CD4-positive, alpha-beta memory T cell (primary cell): ENCODE measurements at regions of chr19 and their contacts with region 1.

Region 1: GRCh38 chr19:49546825-49547565 is 19.2 kb downstream of the RCN3 start:
- DNase-seq: peak; percentile 70 to 81 (median 78)
- H3K4me3 ChIP-seq: peak overlapping the region; percentile 4 to 34
- H3K4me3 Mint-ChIP-seq: peak overlapping the region; percentile 43 to 91 (median 84)
- H3K27ac ChIP-seq: no peak overlapping the region
- H3K27ac Mint-ChIP-seq: peak overlapping the region; percentile 40 to 95 (median 90)
- H3K4me1 ChIP-seq: peaks cover 47% of the 10 kb centered on the region
- H3K4me1 Mint-ChIP-seq: peaks cover 27 to 61% (median 39%) of the 10 kb centered on the region in 4 donors
- H3K27me3 ChIP-seq: no peaks in the 10 kb centered on the region
- H3K27me3 Mint-ChIP-seq: no peaks in the 10 kb centered on the region

Region 2: DNA sequence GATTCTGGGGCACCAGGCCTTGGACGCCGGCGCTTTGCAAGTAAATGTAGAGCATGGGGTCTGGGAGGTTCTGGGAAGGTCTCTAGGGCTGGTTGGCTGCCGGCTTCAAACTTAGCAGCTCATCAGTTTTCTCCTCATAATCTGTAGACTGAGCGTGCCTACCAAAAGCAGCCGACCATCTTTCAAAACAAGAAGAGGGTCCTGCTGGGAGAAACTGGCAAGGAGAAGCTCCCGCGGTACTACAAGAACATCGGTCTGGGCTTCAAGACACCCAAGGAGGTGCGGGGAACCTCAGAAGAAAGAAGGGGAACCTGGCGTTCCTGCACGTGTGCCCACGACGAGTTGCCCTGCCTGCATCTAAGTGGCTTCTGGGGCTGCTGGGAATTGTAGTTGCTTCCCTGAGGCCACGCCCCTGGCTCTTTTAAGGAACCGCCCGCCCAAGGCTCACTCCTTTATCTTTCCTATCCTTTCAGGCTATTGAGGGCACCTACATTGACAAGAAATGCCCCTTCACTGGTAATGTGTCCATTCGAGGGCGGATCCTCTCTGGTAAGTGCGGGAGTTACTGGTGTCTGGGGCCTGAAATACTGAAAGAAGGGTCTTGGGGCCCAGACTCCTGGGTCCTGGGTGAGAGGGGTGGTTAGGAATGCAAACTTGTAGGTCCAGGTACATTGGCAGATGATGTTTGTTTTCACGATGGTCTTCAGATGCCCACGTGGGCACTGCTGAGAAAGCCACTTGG is 49.8 kb before region 1 on chr19:
- CTCF ChIA-PET with region 1: no interaction called
- POLR2A ChIA-PET with region 1: interaction called, 14 read pairs
- intact Hi-C with region 1: no loop called
- DNase-seq: peak; percentile 79 to 89 (median 83)
- H3K4me3 ChIP-seq: peak overlapping the region; percentile 92 to 99
- H3K4me3 Mint-ChIP-seq: peak overlapping the region; percentile 99 to 100 (median 100)
- H3K27ac ChIP-seq: peak overlapping the region; percentile 95
- H3K27ac Mint-ChIP-seq: peak overlapping the region; percentile 95 to 100 (median 99)
- H3K4me1 ChIP-seq: peaks cover 55% of the 10 kb centered on the region
- H3K4me1 Mint-ChIP-seq: peaks cover 23 to 87% (median 43%) of the 10 kb centered on the region in 4 donors
- H3K27me3 ChIP-seq: no peaks in the 10 kb centered on the region
- H3K27me3 Mint-ChIP-seq: no peaks in the 10 kb centered on the region

Region 3: GRCh38 chr19:49502866-49503581 is 44.0 kb before region 1 on chr19:
- CTCF ChIA-PET with region 1: no interaction called
- POLR2A ChIA-PET with region 1: interaction called, 20 read pairs
- intact Hi-C with region 1: loop called (anchors 1 kb)
- DNase-seq: peak; percentile 65 to 79 (median 74)
- H3K4me3 ChIP-seq: no peak overlapping the region
- H3K4me3 Mint-ChIP-seq: peak overlapping the region; percentile 6 to 100 (median 36)
- H3K27ac ChIP-seq: peak overlapping the region; percentile 95
- H3K27ac Mint-ChIP-seq: peak overlapping the region; percentile 91 to 100 (median 99)
- H3K4me1 ChIP-seq: peaks cover 52% of the 10 kb centered on the region
- H3K4me1 Mint-ChIP-seq: peaks cover 16 to 61% (median 33%) of the 10 kb centered on the region in 4 donors
- H3K27me3 ChIP-seq: no peaks in the 10 kb centered on the region
- H3K27me3 Mint-ChIP-seq: no peaks in the 10 kb centered on the region

Region 4: DNA sequence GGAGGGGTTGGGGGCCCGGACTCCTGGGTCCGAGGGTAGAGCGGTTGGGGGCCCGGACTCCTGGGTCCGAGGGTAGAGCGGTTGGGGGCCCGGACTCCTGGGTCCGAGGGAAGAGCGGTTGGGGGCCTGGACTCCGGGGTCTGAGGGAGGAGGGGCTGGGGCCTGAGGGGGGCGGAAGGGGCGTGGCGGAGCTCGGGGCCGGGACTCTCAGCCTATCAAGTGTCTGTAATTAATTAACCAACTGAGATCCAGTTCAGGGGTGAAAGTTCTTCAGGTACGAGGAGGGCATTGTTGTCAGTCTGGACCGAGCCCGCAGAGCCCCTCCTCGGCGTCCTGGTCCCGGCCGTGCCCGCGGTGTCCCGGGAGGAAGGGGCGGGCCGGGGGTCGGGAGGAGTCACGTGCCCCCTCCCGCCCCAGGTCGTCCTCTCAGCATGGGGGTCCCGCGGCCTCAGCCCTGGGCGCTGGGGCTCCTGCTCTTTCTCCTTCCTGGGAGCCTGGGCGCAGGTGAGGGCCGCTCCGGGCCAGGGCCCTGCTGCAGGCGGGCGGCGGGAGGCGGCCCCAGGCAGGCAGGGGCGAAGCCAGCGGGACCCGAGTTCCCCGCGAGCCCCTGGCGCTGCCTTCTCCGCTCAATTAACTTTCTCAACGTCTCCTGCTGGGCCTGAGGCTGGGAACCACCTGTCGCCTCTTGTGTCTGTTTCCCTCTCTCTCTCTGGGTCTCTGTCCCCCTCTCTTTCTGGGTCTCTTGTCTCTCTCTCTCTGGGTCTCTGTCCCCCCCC is 33.8 kb before region 1 on chr19:
- CTCF ChIA-PET with region 1: interaction called, 22 read pairs
- POLR2A ChIA-PET with region 1: interaction called, 20 read pairs
- intact Hi-C with region 1: no loop called
- DNase-seq: no peak
- H3K4me3 ChIP-seq: peak overlapping the region; percentile 6 to 51
- H3K4me3 Mint-ChIP-seq: peak overlapping the region; percentile 82 to 94 (median 88)
- H3K27ac ChIP-seq: peak overlapping the region; percentile 55
- H3K27ac Mint-ChIP-seq: peak overlapping the region in 6 of 7 donors; percentile 21 to 97 (median 88)
- H3K4me1 ChIP-seq: peaks cover 32% of the 10 kb centered on the region
- H3K4me1 Mint-ChIP-seq: peaks cover 14 to 42% (median 25%) of the 10 kb centered on the region in 4 donors
- H3K27me3 ChIP-seq: no peaks in the 10 kb centered on the region
- H3K27me3 Mint-ChIP-seq: no peaks in the 10 kb centered on the region

Region 5: DNA sequence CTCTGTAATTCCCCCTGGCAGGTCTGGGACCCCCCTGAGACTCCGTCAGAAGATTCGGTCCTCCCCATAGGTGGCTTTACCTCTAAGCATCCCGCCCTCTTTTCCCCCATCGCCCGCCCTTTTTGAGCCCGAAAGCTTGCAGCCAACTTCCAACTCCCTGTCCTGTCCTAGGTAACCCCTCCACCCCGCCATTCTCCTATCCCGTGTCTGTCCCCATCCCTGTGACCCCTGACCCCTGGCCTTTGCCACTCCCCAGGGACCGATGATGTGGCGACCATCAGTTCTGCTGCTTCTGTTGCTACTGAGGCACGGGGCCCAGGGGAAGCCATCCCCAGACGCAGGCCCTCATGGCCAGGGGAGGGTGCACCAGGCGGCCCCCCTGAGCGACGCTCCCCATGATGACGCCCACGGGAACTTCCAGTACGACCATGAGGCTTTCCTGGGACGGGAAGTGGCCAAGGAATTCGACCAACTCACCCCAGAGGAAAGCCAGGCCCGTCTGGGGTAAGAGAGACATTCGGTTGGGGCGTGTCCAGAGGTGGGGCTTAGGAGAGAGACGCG is 18.7 kb before region 1 on chr19:
- CTCF ChIA-PET with region 1: interaction called, 17 read pairs
- POLR2A ChIA-PET with region 1: interaction called, 27 read pairs
- intact Hi-C with region 1: no loop called
- DNase-seq: no peak
- H3K4me3 ChIP-seq: peak overlapping the region; percentile 48 to 56
- H3K4me3 Mint-ChIP-seq: peak overlapping the region; percentile 42 to 87 (median 80)
- H3K27ac ChIP-seq: no peak overlapping the region
- H3K27ac Mint-ChIP-seq: peak overlapping the region in 4 of 7 donors; percentile 31 to 82 (median 51)
- H3K4me1 ChIP-seq: peaks cover 19% of the 10 kb centered on the region
- H3K4me1 Mint-ChIP-seq: peaks cover 11 to 33% (median 19%) of the 10 kb centered on the region in 4 donors
- H3K27me3 ChIP-seq: no peaks in the 10 kb centered on the region
- H3K27me3 Mint-ChIP-seq: no peaks in the 10 kb centered on the region

Region 6: DNA sequence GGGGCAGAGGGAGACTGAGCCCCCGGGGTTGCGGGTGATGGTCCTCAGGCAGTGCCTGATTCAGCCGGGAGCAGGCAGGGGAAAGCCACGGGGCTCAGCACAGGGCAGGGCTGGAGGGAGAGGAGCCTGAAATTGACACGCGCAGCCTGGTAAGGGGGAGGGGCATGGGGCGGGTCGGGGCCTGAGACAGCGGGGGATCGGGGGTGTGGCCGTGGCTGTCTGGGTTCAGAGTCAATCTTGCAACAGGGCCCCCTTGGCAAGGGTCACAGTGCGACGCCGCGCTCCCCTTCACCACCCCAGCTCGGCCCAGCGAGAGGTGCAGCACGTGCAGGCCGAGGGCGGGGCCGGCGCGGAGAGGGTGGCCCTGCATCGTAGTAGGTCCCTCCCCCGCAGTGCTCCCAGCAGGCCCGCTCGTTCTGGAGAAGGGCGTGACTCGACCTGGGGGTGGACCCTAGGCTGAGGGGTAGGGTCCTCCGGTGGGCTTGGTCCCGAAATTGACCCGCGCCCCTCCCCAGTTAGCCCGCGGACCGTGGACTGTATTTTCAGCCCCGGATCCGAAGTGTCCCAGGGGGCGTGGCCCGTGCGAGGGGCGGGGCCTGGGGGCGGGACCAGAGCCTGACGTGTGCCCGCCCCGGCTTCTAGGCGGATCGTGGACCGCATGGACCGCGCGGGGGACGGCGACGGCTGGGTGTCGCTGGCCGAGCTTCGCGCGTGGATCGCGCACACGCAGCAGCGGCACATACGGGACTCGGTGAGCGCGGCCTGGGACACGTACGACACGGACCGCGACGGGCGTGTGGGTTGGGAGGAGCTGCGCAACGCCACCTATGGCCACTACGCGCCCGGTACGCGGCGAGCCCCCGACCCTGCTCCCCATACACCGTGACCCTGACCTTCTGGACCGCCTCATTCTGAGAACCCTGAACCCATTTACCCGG is 13.2 kb before region 1 on chr19:
- CTCF ChIA-PET with region 1: interaction called, 47 read pairs
- POLR2A ChIA-PET with region 1: interaction called, 27 read pairs
- intact Hi-C with region 1: no loop called
- DNase-seq: peak; percentile 84 to 91 (median 87)
- H3K4me3 ChIP-seq: peak overlapping the region; percentile 61 to 70
- H3K4me3 Mint-ChIP-seq: peak overlapping the region; percentile 78 to 90 (median 88)
- H3K27ac ChIP-seq: peak overlapping the region; percentile 50
- H3K27ac Mint-ChIP-seq: peak overlapping the region; percentile 17 to 92 (median 83)
- H3K4me1 ChIP-seq: peaks cover 23% of the 10 kb centered on the region
- H3K4me1 Mint-ChIP-seq: peaks cover 16 to 35% (median 22%) of the 10 kb centered on the region in 4 donors
- H3K27me3 ChIP-seq: no peaks in the 10 kb centered on the region
- H3K27me3 Mint-ChIP-seq: no peaks in the 10 kb centered on the region